ENCODE measurements at regions of chr22 and their contacts with region 1.

Region 1: GRCh38 chr22:23219822-23220484 is 39.6 kb downstream of the BCR start:
- DNase-seq: peak in 2 of 3 donors; percentile 65 to 73
- H3K4me3 ChIP-seq: peak overlapping the region in 6 of 7 experiments; percentile 16 to 71 (median 64)
- H3K27ac ChIP-seq: peak overlapping the region; percentile 34 to 91
- H3K4me1 ChIP-seq: peaks cover 51 to 99% (median 97%) of the 10 kb centered on the region in 4 experiments
- H3K27me3 ChIP-seq: no peaks in the 10 kb centered on the region

Region 2: GRCh38 chr22:23231471-23232093 is 11.6 kb after region 1 on chr22:
- CTCF ChIA-PET with region 1: interaction called, 16 read pairs
- POLR2A ChIA-PET with region 1: interaction called, 5 read pairs
- DNase-seq: no peak
- H3K4me3 ChIP-seq: no peak overlapping the region
- H3K27ac ChIP-seq: peak overlapping the region in 1 of 2 experiments; percentile 74
- H3K4me1 ChIP-seq: peaks cover 8 to 57% (median 45%) of the 10 kb centered on the region in 4 experiments
- H3K27me3 ChIP-seq: no peaks in the 10 kb centered on the region

Region 3: GRCh38 chr22:23240639-23241389 is 20.9 kb after region 1 on chr22:
- CTCF ChIA-PET with region 1: interaction called, 16 read pairs
- POLR2A ChIA-PET with region 1: interaction called, 3 read pairs
- DNase-seq: peak; percentile 66 to 82 (median 79)
- H3K4me3 ChIP-seq: peak overlapping the region in 2 of 7 experiments; percentile 8 to 24
- H3K27ac ChIP-seq: peak overlapping the region in 1 of 2 experiments; percentile 62
- H3K4me1 ChIP-seq: peaks cover 6 to 87% (median 43%) of the 10 kb centered on the region in 4 experiments
- H3K27me3 ChIP-seq: no peaks in the 10 kb centered on the region

Region 4: DNA sequence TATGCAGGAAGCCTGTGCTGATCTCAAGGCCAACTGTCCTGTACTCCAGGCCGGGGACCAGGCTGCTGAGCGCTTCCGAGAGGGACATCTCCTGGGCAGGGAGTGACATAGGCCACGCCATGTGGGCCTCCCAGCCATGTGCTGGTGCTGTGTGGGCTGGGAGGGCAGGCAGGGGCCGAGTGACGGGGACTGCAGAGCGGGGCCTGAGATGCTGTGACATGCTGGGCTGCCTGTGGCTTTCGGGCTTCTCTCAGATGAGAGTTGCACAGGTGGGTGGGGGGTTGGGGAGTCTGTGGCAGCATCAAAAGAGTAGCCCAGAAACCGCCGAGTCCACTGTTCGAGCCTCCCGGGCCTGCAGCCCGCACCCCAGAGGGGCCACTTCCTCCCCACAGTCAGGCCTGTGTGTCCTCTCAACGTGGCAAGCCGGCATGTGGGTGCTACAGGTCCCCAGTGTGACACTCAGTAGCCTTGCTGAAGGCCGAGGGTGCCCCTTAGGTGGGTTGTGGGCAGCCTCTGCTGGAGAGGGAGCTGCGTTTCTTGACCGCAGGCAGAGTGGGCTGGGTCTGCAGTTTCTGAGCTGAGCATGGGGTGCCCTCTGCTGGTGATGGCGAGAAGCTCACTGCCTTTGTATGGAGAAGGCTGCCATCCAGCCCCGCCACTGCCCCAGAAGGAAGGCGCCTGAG is 61.6 kb after region 1 on chr22:
- CTCF ChIA-PET with region 1: interaction called, 10 read pairs
- POLR2A ChIA-PET with region 1: no interaction called
- DNase-seq: peak; percentile 82 to 88 (median 84)
- H3K4me3 ChIP-seq: peak overlapping the region in 1 of 7 experiments; percentile 24
- H3K27ac ChIP-seq: no peak overlapping the region
- H3K4me1 ChIP-seq: peaks cover 0 to 11% (median 9%) of the 10 kb centered on the region in 4 experiments
- H3K27me3 ChIP-seq: no peaks in the 10 kb centered on the region

Region 5: GRCh38 chr22:23786752-23787599 is 567.0 kb after region 1 on chr22 and contains the start of gene SMARCB1:
- CTCF ChIA-PET with region 1: no interaction called
- POLR2A ChIA-PET with region 1: no interaction called
- DNase-seq: peak; percentile 79 to 90 (median 89)
- H3K4me3 ChIP-seq: peak within 1 kb of the TSS; percentile 81 to 93 (median 86)
- H3K27ac ChIP-seq: peak within 1 kb of the TSS; percentile 93 to 96
- H3K4me1 ChIP-seq: peaks cover 8 to 51% (median 43%) of the 10 kb centered on the region in 4 experiments
- H3K27me3 ChIP-seq: no peaks in the 10 kb centered on the region